ENCODE measurements at regions of chr7 and their contacts with region 1.

Region 1: GRCh38 chr7:22001345-22002004 is 55.8 kb upstream of the CDCA7L start:
- DNase-seq: peak; percentile 67
- H3K4me3 ChIP-seq: no peak overlapping the region
- H3K27ac ChIP-seq: no peak overlapping the region
- H3K4me1 ChIP-seq: peaks cover 7% of the 10 kb centered on the region
- CTCF ChIP-seq: peak; percentile 94

Region 2: DNA sequence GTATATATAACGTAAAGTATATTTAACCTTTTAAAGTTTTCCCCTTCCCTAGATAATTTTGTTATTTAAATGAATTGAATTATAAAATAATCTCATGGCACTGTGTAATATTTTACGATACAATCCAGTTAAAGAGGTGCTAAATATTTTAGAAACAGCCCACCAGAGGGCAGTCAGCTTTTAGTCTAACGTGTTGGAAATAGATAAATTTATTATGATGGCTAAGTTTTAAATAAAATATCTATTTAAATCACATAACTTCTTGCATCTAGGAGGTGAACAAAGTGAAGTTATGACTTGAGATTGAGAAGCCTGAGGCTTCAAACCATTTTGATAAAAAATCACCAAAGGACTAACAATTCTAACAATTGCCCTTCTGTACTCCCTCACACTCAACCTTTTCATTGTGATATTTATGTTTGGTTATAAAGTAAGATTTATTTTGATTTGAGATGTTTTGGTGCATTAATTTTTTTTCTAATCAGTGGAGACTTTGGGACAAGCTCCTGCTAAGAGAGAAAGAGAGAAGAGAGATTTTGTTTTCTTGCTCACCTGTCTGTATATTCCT is 745.1 kb before region 1 on chr7:
- CTCF ChIA-PET with region 1: no interaction called
- POLR2A ChIA-PET with region 1: no interaction called
- intact Hi-C with region 1: loop called (anchors 5 kb)
- DNase-seq: peak; percentile 45
- H3K4me3 ChIP-seq: no peak overlapping the region
- H3K27ac ChIP-seq: no peak overlapping the region
- H3K4me1 ChIP-seq: no peaks in the 10 kb centered on the region
- CTCF ChIP-seq: peak; percentile 79

Region 3: DNA sequence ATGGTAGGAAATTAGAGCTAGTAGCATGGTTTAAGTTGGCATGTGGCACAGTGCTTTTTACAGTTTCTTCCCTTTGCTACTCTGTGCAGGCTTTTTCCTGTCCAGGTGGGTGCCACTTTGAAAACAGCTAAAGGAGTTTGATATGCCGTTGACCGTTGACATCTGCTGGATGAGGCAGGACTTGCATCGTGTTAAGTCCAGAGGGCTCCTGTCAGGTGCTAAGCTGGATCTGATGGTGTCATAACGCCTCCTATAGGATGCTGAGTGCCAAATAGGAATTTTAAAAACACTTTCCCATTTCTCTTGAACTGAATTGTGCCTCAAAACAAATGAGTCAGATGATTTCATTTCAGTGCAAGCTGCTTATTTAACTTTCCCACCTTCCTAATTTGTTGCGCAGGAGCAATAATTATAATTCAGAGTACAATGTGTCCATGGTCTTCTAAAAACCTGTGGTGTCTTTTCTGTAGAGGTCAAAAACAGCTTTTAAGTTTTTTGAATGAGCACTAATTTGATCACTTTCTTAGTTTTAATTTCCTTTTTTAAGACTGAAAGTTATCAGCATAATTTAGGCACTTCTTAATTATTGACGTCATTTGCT is 234.1 kb before region 1 on chr7:
- CTCF ChIA-PET with region 1: no interaction called
- POLR2A ChIA-PET with region 1: no interaction called
- intact Hi-C with region 1: loop called (anchors 5 kb)
- DNase-seq: peak; percentile 73
- H3K4me3 ChIP-seq: no peak overlapping the region
- H3K27ac ChIP-seq: no peak overlapping the region
- H3K4me1 ChIP-seq: no peaks in the 10 kb centered on the region
- CTCF ChIP-seq: peak; percentile 80

Region 4: DNA sequence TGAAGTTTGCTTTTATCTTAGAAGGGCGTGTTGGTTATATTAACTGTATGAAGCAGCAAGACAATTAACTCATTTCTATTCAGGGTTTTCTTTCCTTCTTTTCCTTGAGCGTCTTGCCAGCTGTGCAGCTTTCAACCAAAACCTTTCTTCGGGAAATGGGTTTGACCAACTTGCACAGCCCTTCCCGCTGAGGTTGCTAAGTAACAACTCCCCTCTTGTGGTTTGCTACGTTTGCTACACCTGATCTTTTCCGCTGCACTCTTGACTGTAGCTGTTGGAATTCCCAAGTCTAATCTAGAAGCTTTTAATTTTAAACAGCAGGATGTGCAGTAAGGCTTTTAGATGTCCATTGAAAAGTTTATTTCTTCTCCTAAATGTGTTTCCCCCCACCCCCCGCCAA is 172.6 kb before region 1 on chr7:
- CTCF ChIA-PET with region 1: no interaction called
- POLR2A ChIA-PET with region 1: no interaction called
- intact Hi-C with region 1: no loop called
- DNase-seq: no peak
- H3K4me3 ChIP-seq: no peak overlapping the region
- H3K27ac ChIP-seq: no peak overlapping the region
- H3K4me1 ChIP-seq: no peaks in the 10 kb centered on the region
- CTCF ChIP-seq: no peak

Region 5: GRCh38 chr7:21844742-21845141 is 156.7 kb before region 1 on chr7:
- CTCF ChIA-PET with region 1: no interaction called
- POLR2A ChIA-PET with region 1: interaction called, 3 read pairs
- intact Hi-C with region 1: loop called (anchors 5 kb)
- DNase-seq: no peak
- H3K4me3 ChIP-seq: no peak overlapping the region
- H3K27ac ChIP-seq: no peak overlapping the region
- H3K4me1 ChIP-seq: no peaks in the 10 kb centered on the region
- CTCF ChIP-seq: no peak

Region 6: DNA sequence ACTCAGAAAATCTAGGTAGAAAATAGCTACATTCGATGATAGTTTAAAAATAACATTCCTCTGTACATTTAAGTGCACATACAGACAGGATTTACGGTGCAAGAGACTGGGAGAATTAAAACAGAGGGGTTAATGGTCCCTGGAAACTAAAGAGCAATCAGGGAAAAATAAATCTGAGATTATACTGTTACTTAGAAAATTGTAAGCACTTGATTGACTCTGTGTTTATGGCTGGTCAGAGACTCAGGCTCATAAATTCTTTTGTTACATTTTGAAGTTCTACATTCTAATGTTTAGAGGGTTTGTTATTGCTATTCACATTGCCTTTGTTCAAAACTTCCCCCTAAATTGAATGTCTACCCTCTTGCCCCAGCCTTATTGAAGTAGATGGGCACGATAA is 110.2 kb before region 1 on chr7:
- CTCF ChIA-PET with region 1: no interaction called
- POLR2A ChIA-PET with region 1: no interaction called
- intact Hi-C with region 1: loop called (anchors 5 kb)
- DNase-seq: no peak
- H3K4me3 ChIP-seq: no peak overlapping the region
- H3K27ac ChIP-seq: no peak overlapping the region
- H3K4me1 ChIP-seq: no peaks in the 10 kb centered on the region
- CTCF ChIP-seq: no peak

Region 7: DNA sequence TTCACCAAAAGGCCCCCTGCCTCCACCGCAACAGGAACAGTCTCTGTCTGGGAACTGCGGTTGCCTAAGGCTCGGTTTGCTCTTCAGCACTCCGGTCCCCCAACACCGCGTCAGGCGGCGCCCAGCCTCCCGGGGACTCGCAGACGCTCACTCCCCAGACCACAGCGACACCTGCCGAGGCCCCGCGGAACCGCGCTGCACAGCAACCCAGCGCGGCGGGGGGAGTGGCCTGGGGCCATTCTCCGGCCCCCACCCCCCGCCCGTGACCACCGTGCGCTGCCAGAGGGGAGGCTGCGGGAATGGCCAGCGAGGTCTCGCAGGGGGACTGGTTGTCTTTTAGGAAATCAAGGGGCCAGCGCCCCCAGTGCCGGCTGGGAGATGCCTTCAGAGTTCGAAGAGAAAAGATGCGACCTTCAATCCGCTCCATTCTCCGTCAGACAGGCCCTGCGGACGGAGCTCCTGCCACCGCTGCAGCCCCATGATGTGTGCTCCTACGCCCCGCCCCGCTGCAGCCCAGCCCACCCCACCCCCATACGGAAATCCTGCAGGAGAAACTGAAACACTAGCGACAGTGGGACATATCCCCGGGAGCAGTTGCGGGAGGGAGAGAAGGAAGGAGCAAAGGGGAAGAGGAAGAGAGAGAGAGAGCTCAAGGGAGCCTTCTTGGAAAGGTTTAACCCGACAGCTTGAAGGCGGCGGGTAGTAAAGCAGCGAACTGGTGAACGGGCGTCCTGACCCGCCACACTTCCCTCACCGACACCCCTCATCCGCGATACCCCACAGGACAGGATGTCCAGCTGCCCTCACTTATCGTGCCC is 81.6 kb after region 1 on chr7:
- CTCF ChIA-PET with region 1: no interaction called
- POLR2A ChIA-PET with region 1: no interaction called
- intact Hi-C with region 1: loop called (anchors 2 kb)
- DNase-seq: peak; percentile 79
- H3K4me3 ChIP-seq: peak overlapping the region; percentile 69
- H3K27ac ChIP-seq: no peak overlapping the region
- H3K4me1 ChIP-seq: peaks cover 5% of the 10 kb centered on the region
- CTCF ChIP-seq: peak; percentile 93

Region 8: DNA sequence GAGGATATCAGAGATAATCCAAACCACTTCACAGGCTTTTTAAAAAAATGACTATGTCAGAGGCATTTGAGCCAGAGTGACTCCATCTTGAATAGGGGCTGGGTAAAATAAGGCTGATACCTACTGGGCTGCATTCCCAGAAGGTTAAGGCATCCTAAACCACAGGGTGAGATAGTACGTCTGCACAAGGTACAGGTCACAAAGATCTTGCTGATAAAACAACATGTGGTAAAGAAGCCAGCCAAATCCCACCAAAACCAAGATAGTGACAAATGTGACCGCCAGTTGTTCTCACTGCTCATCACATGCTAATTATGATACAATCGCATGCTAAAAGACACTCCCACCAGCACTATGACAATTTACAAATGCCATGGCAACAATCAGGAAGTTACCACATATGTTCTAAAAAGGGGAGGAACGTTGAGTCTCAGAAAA is 178.0 kb after region 1 on chr7:
- CTCF ChIA-PET with region 1: no interaction called
- POLR2A ChIA-PET with region 1: no interaction called
- intact Hi-C with region 1: no loop called
- DNase-seq: no peak
- H3K4me3 ChIP-seq: no peak overlapping the region
- H3K27ac ChIP-seq: no peak overlapping the region
- H3K4me1 ChIP-seq: no peaks in the 10 kb centered on the region
- CTCF ChIP-seq: no peak

Measured in OCI-LY7 (cell line).